ENCODE measurements at regions of chr4 and their contacts with region 1.

Region 1: GRCh38 chr4:142282870-142283431 is 563.1 kb downstream of the INPP4B start:
- DNase-seq: peak; percentile 30
- H3K4me3 ChIP-seq: no peak overlapping the region
- H3K27ac ChIP-seq: no peak overlapping the region
- H3K4me1 ChIP-seq: no peaks in the 10 kb centered on the region
- H3K27me3 ChIP-seq: no peaks in the 10 kb centered on the region
- CTCF ChIP-seq: peak; percentile 38 to 45
- POLR2A ChIP-seq: no peak

Region 2: DNA sequence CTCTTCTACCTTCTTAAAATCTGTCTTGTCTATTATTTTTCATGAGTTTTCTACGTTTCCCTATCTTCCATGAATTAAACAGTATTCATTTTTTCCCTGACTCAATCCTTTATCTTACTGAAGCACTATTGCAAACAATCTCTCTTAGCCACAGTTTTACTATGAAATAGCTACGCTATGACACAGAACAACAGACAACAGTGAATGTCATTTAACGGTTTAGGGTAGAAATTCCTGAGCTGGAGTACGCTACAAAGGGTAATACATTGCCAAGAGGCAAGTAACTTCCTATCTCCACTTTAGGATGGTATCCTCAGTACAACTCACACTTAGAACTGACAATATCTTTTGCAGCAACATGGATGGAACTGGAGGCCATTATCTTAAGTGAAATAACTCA is 10.6 kb after region 1 on chr4:
- CTCF ChIA-PET with region 1: interaction called, 12 read pairs
- POLR2A ChIA-PET with region 1: no interaction called
- dilution Hi-C with region 1: no loop called
- intact Hi-C with region 1: no loop called
- DNase-seq: no peak
- H3K4me3 ChIP-seq: no peak overlapping the region
- H3K27ac ChIP-seq: no peak overlapping the region
- H3K4me1 ChIP-seq: no peaks in the 10 kb centered on the region
- H3K27me3 ChIP-seq: no peaks in the 10 kb centered on the region
- CTCF ChIP-seq: no peak
- POLR2A ChIP-seq: no peak

Region 3: DNA sequence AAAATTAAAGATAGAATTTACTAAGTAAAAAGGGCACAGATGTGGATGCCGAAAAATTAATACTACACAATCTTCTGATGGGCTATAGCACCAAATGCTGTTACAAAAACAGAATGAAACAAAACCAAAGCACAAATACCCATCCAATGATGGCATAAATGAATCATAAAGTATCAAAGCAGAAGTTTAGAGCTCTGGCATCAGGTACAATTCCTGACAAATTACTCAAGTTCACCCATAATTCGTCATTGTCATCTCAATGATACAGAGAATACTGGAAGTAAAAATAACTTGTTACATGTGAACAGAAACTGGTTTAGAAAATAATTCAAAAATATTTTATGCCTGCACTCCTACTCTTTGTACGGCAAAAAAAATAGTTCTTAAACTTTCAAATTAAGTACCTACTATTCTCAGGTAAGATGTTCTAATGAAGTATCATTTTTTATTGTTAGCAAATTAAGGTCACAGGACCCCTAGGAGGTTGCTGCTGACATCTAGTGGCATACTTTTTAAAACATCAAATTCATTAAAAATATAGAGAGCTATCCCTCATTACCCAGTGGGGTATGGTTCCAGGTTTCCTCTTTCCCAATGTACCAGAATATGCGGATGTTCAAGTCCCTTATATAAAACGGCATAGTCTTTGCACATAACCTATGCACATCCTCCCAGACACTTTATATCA is 437.0 kb after region 1 on chr4:
- CTCF ChIA-PET with region 1: interaction called, 10 read pairs
- POLR2A ChIA-PET with region 1: no interaction called
- dilution Hi-C with region 1: no loop called
- intact Hi-C with region 1: loop called (anchors 1 kb)
- DNase-seq: peak; percentile 39
- H3K4me3 ChIP-seq: no peak overlapping the region
- H3K27ac ChIP-seq: no peak overlapping the region
- H3K4me1 ChIP-seq: no peaks in the 10 kb centered on the region
- H3K27me3 ChIP-seq: no peaks in the 10 kb centered on the region
- CTCF ChIP-seq: peak in 1 of 2 donors; percentile 27
- POLR2A ChIP-seq: no peak

Region 4: DNA sequence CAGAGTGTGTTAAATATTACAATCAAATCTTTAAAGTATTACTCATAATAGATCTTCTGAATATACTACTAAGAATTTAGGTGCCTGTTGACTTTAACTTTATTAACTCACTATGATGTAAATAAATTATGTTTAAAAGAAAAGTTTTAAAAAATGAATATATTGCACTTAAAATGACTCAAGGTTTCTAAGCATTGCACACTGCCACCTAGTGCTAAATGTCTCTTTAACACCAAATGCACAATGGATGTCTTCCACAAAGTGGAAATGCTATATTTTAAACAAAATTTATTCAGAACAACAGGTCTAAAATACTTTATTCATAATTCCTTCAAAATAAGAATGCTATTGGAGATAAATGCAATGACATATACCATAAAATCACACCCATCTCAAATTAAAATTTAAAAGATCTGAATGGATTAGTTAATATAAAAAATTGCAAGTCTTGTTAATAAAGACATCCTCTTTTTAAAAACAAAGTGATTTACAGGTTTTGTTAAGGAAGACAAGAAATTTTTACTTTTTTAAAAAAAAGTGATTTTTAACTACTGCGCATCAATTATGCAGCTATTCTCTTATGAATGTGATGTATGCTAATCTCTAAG is 557.7 kb after region 1 on chr4:
- CTCF ChIA-PET with region 1: no interaction called
- POLR2A ChIA-PET with region 1: no interaction called
- dilution Hi-C with region 1: no loop called
- intact Hi-C with region 1: loop called (anchors 2 kb)
- DNase-seq: peak; percentile 62
- H3K4me3 ChIP-seq: no peak overlapping the region
- H3K27ac ChIP-seq: no peak overlapping the region
- H3K4me1 ChIP-seq: no peaks in the 10 kb centered on the region
- H3K27me3 ChIP-seq: peaks cover 0 to 6% of the 10 kb centered on the region in 2 experiments
- CTCF ChIP-seq: peak; percentile 47
- POLR2A ChIP-seq: no peak

Measured in endothelial cell of umbilical vein (primary cell).